Posterior vena cava (tissue), 2 donors: ENCODE measurements at regions of chr7 and their contacts with region 1.

Region 1: GRCh38 chr7:132030086-132030568 is 473.7 kb upstream of the PODXL start:
- DNase-seq: no peak

Region 2: GRCh38 chr7:132518102-132518838 is 488.1 kb after region 1 on chr7:
- intact Hi-C with region 1: loop called in 1 of 2 experiments (anchors 2 kb)
- DNase-seq: no peak